AG04450 (cell line): ENCODE measurements at regions of chr13 and their contacts with region 1.

Region 1: GRCh38 chr13:88329066-88329465 is 657.9 kb downstream of the SLITRK5 start:
- DNase-seq: no peak
- H3K4me3 ChIP-seq: no peak overlapping the region
- H3K27ac ChIP-seq: no peak overlapping the region
- H3K27me3 ChIP-seq: no peaks in the 10 kb centered on the region
- CTCF ChIP-seq: no peak

Region 2: DNA sequence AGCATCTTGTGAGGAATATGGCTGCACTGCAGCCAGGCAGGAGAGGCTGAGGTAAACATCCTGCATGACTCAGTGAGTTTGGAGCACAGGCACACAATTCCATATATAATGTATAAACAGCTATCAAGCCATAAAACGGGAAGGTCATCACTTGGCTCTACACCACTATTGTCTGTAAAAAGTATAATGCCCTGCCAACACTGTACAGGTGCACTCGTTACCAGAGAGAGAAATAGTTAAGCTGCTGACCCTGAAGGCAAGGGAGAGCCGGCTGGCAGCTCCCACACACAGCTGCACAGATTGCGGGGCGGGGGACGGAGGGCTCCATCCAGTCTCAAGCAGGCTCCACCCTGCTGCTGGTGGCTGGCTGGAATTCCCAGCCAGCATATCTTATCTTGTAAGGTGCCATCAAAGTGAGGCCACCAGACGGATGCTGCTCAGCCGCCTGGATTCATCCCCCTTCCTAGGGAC is 10.2 kb after region 1 on chr13:
- CTCF ChIA-PET with region 1: no interaction called
- POLR2A ChIA-PET with region 1: interaction called, 11 read pairs
- DNase-seq: no peak
- H3K4me3 ChIP-seq: no peak overlapping the region
- H3K27ac ChIP-seq: no peak overlapping the region
- H3K27me3 ChIP-seq: no peaks in the 10 kb centered on the region
- CTCF ChIP-seq: no peak

Region 3: DNA sequence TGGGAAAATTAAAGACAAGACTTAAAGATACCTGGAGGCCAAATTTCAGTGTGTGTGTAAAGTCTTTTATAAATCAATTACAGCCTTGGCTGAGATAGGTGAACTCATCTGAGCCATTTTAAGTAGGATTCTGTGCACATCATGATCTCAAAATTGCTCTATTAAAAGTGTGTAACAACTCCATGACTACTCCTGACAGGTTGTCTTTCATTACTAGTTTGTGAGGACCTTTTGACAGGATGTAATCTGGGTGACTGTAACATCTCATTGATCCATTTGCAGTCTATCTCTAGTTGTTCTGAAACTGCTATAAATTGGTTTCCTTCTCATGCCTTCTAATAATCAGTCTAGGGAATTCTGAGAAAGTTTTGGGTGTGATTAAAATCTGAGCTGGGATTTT is 95.4 kb after region 1 on chr13:
- CTCF ChIA-PET with region 1: no interaction called
- POLR2A ChIA-PET with region 1: no interaction called
- DNase-seq: no peak
- H3K4me3 ChIP-seq: no peak overlapping the region
- H3K27ac ChIP-seq: no peak overlapping the region
- H3K27me3 ChIP-seq: no peaks in the 10 kb centered on the region
- CTCF ChIP-seq: no peak